Activated B cell treated with CpG ODN at 0.5 μM for 24 hours (primary cell): ENCODE measurements at regions of chr2 and their contacts with region 1.

Region 1: GRCh38 chr2:159939946-159940345 is 122.5 kb downstream of the PLA2R1 start:
- DNase-seq: no peak
- ATAC-seq: peak; percentile 54
- H3K4me3 Mint-ChIP-seq: no peak overlapping the region
- H3K27ac Mint-ChIP-seq: no peak overlapping the region
- H3K4me1 Mint-ChIP-seq: peaks cover 8% of the 10 kb centered on the region
- H3K27me3 Mint-ChIP-seq: no peaks in the 10 kb centered on the region
- CTCF ChIP-seq: no peak

Region 2: GRCh38 chr2:159855557-159856061 is 84.3 kb before region 1 on chr2:
- CTCF ChIA-PET with region 1: interaction called, 3 read pairs
- POLR2A ChIA-PET with region 1: no interaction called
- intact Hi-C with region 1: loop called (anchors 5 kb)
- DNase-seq: no peak
- ATAC-seq: no peak
- H3K4me3 Mint-ChIP-seq: no peak overlapping the region
- H3K27ac Mint-ChIP-seq: no peak overlapping the region
- H3K4me1 Mint-ChIP-seq: peaks cover 4% of the 10 kb centered on the region
- H3K27me3 Mint-ChIP-seq: no peaks in the 10 kb centered on the region
- CTCF ChIP-seq: no peak

Region 3: DNA sequence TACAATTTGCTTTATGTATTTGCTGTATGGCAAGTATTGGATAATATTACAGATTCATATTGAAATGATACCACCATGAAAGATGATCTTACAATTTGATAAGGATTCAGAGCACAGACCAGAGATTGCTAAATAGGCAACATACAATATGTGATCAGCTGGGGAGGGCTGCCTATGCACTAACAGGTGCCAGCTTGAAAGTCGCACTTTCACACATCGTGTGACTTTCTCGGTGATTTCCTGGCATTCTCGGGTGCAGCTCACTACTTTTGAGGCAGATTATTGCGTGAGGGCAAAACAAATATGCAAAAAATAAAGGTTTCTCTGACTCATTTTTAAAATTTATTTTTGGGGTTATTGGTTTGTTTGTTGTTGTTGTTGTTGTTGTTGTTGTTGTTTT is 517.6 kb after region 1 on chr2:
- CTCF ChIA-PET with region 1: no interaction called
- POLR2A ChIA-PET with region 1: no interaction called
- intact Hi-C with region 1: no loop called
- DNase-seq: no peak
- ATAC-seq: no peak
- H3K4me3 Mint-ChIP-seq: no peak overlapping the region
- H3K27ac Mint-ChIP-seq: no peak overlapping the region
- H3K4me1 Mint-ChIP-seq: no peaks in the 10 kb centered on the region
- H3K27me3 Mint-ChIP-seq: peaks cover 5% of the 10 kb centered on the region
- CTCF ChIP-seq: no peak